ENCODE measurements at regions of chr17 and their contacts with region 1.

Region 1: DNA sequence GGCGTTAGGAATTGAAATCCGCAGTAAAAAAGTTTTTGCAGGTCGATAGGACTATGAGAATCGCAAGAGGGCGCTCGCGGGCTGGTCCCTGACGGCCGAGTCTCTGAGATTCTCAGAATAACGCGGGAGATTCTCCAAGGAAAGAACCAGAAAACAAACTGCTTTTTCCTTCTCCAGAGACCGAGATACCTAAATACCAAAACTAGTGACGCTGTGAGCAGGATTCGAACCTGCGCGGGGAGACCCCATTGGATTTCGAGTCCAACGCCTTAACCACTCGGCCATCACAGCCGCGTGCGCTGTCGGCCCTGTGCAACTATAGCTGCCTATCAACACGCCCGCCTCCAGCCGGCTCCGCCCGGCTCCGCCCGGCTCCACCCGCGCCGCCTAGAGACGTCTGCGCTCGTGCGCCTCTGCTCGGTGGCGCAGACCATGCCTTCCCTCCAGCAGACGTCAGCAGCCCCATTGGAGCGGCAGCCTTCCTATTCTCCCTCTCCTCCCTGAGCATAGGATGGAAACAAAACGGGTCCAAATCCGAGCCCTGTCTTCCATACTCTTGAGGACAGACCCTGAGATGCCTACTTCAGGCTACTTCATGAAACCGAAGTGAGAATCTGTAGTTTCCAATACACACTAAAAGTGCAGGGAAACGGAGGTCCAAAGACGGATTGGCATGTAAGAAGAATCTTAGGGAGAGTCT is 13.4 kb downstream of the PER1 start:
- DNase-seq: peak; percentile 98
- ATAC-seq: peak; percentile 93
- H3K4me3 Mint-ChIP-seq: no peak overlapping the region
- H3K27ac Mint-ChIP-seq: no peak overlapping the region
- H3K4me1 Mint-ChIP-seq: peaks cover 5% of the 10 kb centered on the region
- H3K27me3 Mint-ChIP-seq: peaks cover 4% of the 10 kb centered on the region

Region 2: DNA sequence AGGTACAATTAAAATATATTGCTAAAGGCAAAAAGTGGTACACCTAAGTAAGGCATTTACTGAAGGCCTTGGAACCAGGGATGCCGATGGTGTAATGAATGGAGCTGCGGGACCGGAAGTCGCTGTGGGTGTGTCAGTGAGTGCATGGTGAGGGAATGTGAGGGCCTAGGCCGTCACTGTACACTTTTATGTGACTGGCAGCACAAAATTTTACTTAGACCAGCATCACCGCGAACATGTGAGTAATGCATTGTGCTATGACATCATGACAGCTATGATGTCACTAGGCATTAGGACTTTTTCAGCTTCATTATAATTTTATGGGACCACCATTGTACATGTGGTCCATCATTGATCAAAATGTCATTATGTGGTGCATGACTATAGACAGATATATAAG is 85.2 kb before region 1 on chr17:
- CTCF ChIA-PET with region 1: no interaction called
- POLR2A ChIA-PET with region 1: no interaction called
- DNase-seq: no peak
- ATAC-seq: no peak
- H3K4me3 Mint-ChIP-seq: no peak overlapping the region
- H3K27ac Mint-ChIP-seq: no peak overlapping the region
- H3K4me1 Mint-ChIP-seq: peaks cover 24% of the 10 kb centered on the region
- H3K27me3 Mint-ChIP-seq: peaks cover 13% of the 10 kb centered on the region

Region 3: DNA sequence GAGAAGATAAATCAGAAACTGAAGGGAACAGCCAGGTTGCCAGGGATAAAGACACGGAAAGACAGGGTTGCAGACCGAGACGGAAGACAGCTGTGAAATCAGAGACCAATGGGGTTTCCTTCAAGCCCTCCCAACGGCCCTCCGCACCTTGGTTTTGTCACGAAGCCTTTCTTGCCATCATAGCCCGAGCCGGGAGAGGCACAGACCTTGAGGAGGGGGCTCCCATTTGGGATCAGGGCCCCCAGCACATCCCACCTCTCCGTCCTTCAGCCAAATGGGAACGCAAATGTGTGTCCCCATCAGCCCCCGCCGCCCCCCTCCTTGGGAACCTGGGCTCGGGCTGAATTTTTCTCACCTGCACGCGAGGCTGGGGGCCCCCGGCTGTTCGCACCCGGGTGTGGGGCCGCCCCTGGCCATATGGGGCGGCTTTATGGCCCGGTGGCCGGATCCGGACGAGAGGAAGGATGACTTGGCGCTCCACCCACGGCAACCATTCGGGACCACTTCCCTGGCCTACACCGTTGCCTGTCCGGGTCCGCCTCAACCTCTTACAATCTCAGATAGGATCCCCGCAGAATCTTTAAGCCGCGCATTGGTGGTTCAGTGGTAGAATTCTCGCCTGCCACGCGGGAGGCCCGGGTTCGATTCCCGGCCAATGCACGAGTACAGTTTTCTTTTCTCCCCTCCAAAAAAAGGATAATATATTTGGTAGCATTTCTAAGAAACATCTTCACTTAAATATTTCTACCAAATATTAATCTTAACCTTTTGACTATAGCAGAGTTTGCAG is 13.5 kb before region 1 on chr17:
- CTCF ChIA-PET with region 1: interaction called, 52 read pairs
- POLR2A ChIA-PET with region 1: interaction called, 10 read pairs
- DNase-seq: peak; percentile 90
- ATAC-seq: peak; percentile 35
- H3K4me3 Mint-ChIP-seq: peak overlapping the region; percentile 88
- H3K27ac Mint-ChIP-seq: peak overlapping the region; percentile 88
- H3K4me1 Mint-ChIP-seq: peaks cover 57% of the 10 kb centered on the region
- H3K27me3 Mint-ChIP-seq: peaks cover 44% of the 10 kb centered on the region

Region 4: DNA sequence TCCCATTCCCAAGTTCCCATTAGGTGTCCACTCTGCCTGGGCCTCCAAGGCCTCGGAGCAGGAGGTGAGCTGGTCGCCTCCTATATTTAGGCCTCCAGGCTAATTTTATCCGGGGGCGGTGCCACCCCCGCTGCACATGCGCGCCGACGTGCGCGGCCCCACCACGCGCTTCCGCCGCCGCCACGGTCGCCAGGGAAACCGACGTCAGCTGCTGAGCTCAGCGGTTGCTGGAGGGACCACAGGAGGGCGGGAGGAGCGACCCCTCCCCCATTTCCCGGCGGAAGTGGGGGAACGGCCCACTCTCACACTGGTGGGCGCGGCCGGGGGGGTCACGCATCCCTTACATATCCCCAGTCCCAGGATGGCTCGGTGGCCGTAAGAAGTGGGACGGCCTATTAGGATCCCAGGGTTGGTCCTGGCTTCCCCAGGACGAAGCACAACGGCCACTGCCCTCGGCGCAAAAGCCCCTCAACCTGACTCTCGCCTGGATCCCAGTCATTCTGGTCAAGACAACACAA is 12.4 kb after region 1 on chr17:
- CTCF ChIA-PET with region 1: interaction called, 165 read pairs
- POLR2A ChIA-PET with region 1: interaction called, 28 read pairs
- DNase-seq: peak; percentile 93
- ATAC-seq: peak; percentile 42
- H3K4me3 Mint-ChIP-seq: peak overlapping the region; percentile 85
- H3K27ac Mint-ChIP-seq: peak overlapping the region; percentile 91
- H3K4me1 Mint-ChIP-seq: peaks cover 15% of the 10 kb centered on the region
- H3K27me3 Mint-ChIP-seq: no peaks in the 10 kb centered on the region

Region 5: DNA sequence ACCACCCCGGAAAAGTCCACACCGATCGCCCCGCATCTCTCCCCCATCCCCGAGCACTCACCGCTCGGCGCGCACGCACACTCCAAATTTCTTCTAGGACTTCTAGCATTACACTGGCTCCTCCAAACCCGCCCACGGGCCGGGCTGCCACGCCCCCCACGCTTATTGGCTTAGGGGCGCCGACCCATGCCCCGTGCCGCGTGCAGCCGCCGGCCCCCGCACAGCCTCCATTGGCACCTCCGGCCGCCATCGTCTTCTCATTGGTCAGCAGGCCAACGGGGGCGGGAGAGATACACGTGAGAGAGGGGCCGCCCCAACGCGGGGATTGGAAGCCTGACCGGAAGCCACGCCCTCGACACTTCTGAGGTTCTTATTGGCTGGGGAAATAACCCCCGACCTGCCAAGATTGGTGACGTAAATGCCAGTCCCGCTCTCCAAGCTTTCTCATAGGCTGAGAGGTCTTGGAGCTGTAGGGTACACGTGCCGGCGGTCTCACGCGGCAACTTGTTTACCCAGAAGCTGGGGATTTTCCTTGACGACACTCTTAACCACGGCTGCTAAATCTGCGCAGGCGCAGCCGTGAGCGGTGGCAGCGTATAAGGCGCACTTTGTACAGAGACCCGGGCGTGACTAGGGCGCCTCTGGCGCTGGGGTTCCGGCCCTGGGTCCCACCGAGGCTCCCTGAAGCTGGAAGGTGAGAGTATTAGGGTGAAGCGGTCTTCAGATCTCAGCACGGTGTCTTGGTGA is 17.6 kb after region 1 on chr17:
- CTCF ChIA-PET with region 1: interaction called, 165 read pairs
- POLR2A ChIA-PET with region 1: interaction called, 28 read pairs
- DNase-seq: peak; percentile 100
- ATAC-seq: peak; percentile 82
- H3K4me3 Mint-ChIP-seq: no peak overlapping the region
- H3K27ac Mint-ChIP-seq: no peak overlapping the region
- H3K4me1 Mint-ChIP-seq: peaks cover 36% of the 10 kb centered on the region
- H3K27me3 Mint-ChIP-seq: no peaks in the 10 kb centered on the region

Region 6: DNA sequence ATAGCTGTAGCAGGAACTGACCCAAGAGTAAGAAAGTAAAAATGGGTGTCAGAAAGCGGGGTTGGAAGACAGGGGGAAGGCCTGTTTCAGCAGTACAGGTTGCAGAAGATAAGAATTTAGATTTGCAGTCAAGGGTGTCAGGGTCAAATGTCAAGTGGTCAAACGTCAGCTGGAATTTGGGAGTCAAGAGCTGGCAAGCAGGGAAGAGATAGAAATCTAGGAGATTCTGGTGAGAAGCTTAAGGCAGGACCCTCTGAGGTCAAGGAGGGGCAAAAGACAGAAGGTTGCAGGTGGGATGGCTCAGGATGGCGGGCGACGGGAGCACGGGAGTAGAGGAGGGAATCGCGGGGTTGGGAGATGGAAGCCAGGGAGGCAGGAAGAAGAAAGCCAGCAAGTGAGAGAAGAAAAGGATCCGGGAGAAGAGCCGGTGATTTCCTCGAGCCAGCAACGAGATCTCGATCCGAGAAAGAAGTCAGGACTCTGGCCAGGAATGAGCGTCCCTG is 156.0 kb after region 1 on chr17:
- CTCF ChIA-PET with region 1: interaction called, 14 read pairs
- POLR2A ChIA-PET with region 1: no interaction called
- DNase-seq: no peak
- ATAC-seq: no peak
- H3K4me3 Mint-ChIP-seq: peak overlapping the region; percentile 84
- H3K27ac Mint-ChIP-seq: peak overlapping the region; percentile 90
- H3K4me1 Mint-ChIP-seq: peaks cover 48% of the 10 kb centered on the region
- H3K27me3 Mint-ChIP-seq: no peaks in the 10 kb centered on the region

Measured in activated CD8-positive, alpha-beta T cell treated with anti-CD3 and anti-CD28 coated beads, Interleukin-2, amount 10 ng/mL, durations not matched to agents 7 days and 5 days (primary cell).